OCI-LY7 (cell line): ENCODE measurements at regions of chr6 and their contacts with region 1.

Region 1: DNA sequence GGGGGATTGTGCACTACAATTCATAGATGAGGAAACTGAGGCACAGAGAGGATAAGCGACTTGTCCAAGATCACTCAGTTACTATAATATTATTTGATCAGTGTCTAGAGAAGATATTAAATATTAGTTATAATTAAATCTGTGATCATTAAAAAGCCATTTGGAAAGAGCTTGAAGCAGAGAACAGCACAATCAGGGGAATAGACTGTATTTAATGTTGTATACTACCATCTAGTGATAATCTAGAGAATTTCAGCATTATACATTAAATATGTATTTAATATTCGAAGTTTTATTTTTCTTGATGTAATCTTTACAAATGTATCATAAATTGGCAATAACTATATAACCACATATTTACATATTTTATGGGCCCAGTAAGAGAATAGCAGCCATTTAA is 20.1 kb upstream of the MTCL3 start:
- DNase-seq: peak; percentile 20
- H3K4me3 ChIP-seq: no peak overlapping the region
- H3K27ac ChIP-seq: no peak overlapping the region
- H3K4me1 ChIP-seq: no peaks in the 10 kb centered on the region
- CTCF ChIP-seq: peak; percentile 78

Region 2: GRCh38 chr6:127186889-127187288 is 352.4 kb before region 1 on chr6:
- CTCF ChIA-PET with region 1: no interaction called
- POLR2A ChIA-PET with region 1: no interaction called
- intact Hi-C with region 1: loop called (anchors 5 kb)
- DNase-seq: peak; percentile 21
- H3K4me3 ChIP-seq: no peak overlapping the region
- H3K27ac ChIP-seq: no peak overlapping the region
- H3K4me1 ChIP-seq: no peaks in the 10 kb centered on the region
- CTCF ChIP-seq: peak; percentile 83

Region 3: DNA sequence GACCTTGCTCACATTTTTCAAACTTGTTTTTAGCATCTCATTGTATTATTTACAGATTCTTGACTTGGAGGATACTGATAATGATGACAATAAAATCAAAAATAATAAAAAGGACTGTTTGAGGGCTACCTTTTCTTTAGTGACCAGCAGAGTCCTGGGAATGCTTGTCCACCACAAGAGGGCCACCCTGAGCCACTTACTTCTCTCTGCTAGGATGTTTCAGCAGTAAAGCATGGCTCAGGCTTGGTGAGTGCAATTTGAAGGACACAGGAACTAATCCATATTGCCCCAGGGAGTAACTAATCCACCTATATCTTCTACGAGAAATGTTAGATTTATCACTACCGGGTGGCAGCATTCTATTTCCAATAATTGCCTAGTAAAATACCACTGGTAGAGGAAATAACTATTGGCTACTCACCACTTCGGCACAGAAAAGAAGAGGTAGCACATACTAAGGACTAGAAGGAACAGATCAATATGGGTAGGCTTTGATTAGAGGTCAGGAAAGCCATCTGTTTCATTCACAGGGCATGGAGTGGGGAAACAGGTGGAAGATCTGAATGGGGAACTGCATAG is 74.3 kb before region 1 on chr6:
- CTCF ChIA-PET with region 1: no interaction called
- POLR2A ChIA-PET with region 1: no interaction called
- intact Hi-C with region 1: loop called (anchors 1 kb)
- DNase-seq: peak; percentile 37
- H3K4me3 ChIP-seq: no peak overlapping the region
- H3K27ac ChIP-seq: no peak overlapping the region
- H3K4me1 ChIP-seq: no peaks in the 10 kb centered on the region
- CTCF ChIP-seq: peak; percentile 85

Region 4: GRCh38 chr6:127522714-127523113 is 16.6 kb before region 1 on chr6:
- CTCF ChIA-PET with region 1: no interaction called
- POLR2A ChIA-PET with region 1: no interaction called
- intact Hi-C with region 1: no loop called
- DNase-seq: no peak
- H3K4me3 ChIP-seq: no peak overlapping the region
- H3K27ac ChIP-seq: no peak overlapping the region
- H3K4me1 ChIP-seq: no peaks in the 10 kb centered on the region
- CTCF ChIP-seq: no peak